Activated naive CD8-positive, alpha-beta T cell treated with anti-CD3 and anti-CD28 coated beads, Interleukin-2, amount 10 ng/mL, durations not matched to agents 7 days and 5 days (primary cell): ENCODE measurements at regions of chr12 and their contacts with region 1.

Region 1: DNA sequence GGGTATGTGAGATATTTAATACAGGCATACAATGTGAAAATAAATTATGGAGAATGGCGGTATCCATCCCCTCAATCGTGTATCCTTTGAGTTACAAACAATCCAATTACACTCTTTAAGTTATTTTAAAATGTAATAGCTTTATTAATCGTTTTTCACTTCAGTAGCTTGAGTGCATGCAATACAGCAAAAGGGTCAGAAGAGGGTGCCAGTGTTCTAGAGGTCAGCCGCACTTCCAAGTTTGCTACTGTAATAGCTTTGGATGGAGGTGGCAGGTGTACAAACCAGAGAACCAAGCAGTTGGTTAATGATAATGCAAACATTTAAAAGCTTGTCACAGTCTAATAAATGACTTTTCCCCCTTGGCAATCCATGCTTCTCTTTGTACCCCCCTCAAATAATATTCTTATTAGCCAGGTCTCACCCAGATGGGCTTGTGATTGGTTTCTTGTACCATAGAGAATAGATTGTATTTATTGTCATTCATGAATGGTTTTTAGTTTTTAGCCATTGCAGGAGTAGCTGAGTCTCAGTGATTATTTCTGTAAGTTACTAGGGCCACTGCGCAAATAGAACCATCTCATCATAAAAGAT is 127.0 kb downstream of the ERC1 start:
- DNase-seq: peak; percentile 63
- ATAC-seq: peak; percentile 55
- H3K4me3 Mint-ChIP-seq: no peak overlapping the region
- H3K27ac Mint-ChIP-seq: no peak overlapping the region
- H3K4me1 Mint-ChIP-seq: peaks cover 10% of the 10 kb centered on the region
- H3K27me3 Mint-ChIP-seq: no peaks in the 10 kb centered on the region

Region 2: DNA sequence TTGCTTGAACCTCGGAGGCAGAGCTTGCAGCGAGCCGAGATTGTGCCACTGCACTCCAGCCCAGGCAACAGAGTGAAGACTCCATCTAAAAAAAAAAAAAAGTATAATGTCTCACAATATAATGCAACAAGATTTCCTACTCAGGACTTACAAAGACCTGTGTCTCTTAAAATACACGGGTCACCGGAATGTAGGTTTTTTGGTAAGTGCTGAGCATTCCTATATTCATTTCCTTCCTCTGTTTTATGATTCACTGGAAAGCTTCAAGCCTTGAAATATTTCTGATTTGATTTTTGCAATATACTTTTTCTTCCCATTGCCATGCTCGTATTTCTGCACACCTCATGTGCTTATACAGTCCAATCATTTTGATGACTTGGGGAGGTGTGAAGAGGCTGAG is 230.5 kb after region 1 on chr12:
- POLR2A ChIA-PET with region 1: no interaction called
- DNase-seq: no peak
- ATAC-seq: no peak
- H3K4me3 Mint-ChIP-seq: no peak overlapping the region
- H3K27ac Mint-ChIP-seq: no peak overlapping the region
- H3K4me1 Mint-ChIP-seq: peaks cover 3% of the 10 kb centered on the region
- H3K27me3 Mint-ChIP-seq: no peaks in the 10 kb centered on the region

Region 3: GRCh38 chr12:1583421-1584078 is 465.5 kb after region 1 on chr12:
- POLR2A ChIA-PET with region 1: interaction called, 14 read pairs
- DNase-seq: no peak
- ATAC-seq: no peak
- H3K4me3 Mint-ChIP-seq: peak overlapping the region; percentile 30
- H3K27ac Mint-ChIP-seq: no peak overlapping the region
- H3K4me1 Mint-ChIP-seq: peaks cover 18% of the 10 kb centered on the region
- H3K27me3 Mint-ChIP-seq: no peaks in the 10 kb centered on the region